MCF 10A (cell line): ENCODE measurements at regions of chr1 and their contacts with region 1.

Region 1: DNA sequence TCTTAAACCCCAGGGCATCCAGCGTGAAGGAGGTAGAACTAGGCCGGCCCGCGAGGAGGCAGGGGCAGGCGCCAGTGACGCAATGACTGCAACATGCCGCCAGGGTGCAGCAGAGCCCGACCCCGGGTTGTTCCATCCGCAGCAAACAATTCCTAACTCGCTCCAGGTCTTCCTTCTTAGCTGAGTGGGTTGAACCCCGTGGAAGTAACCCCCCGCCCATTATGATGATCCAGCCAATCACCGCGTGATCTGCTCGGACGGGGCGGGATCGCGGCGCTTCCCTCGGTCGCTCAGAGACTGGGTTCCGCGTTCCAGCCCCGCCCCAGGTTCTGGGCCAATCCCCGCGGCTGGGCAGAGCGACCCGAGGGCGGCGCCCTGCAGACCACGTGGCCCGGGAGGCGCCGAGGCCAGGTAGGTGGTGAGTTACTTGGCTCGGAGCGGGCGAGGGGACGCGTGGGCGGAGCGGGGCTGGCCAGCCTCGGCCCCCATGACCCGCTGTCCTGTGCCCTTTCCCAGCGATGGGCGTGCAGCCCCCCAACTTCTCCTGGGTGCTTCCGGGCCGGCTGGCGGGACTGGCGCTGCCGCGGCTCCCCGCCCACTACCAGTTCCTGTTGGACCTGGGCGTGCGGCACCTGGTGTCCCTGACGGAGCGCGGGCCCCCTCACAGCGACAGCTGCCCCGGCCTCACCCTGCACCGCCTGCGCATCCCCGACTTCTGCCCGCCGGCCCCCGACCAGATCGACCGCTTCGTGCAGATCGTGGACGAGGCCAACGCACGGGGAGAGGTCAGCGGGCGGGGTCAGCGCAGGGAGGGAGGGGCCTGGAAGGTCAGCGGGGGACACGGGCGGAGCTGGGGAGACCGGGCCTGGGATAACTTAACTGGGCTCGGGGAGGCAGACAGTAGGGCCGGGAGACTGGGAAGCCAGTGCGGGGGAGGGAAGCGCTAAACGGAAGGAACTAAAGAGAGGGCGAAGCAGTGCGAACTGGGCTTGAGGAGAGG is at the start of gene DUSP23:
- DNase-seq: peak; percentile 100
- H3K4me3 Mint-ChIP-seq: peak within 1 kb of the TSS; percentile 87
- H3K27ac Mint-ChIP-seq: peak within 1 kb of the TSS; percentile 71
- H3K4me1 Mint-ChIP-seq: peaks cover 65% of the 10 kb centered on the region
- H3K27me3 Mint-ChIP-seq: no peaks in the 10 kb centered on the region
- CTCF ChIP-seq: peak; percentile 97
- total RNA-seq, gene DUSP23: 119 and 178 TPM in 2 replicates

Region 2: GRCh38 chr1:159341736-159342135 is 439.1 kb before region 1 on chr1:
- CTCF ChIA-PET with region 1: no interaction called
- POLR2A ChIA-PET with region 1: no interaction called
- intact Hi-C with region 1: loop called (anchors 5 kb)
- DNase-seq: peak; percentile 20
- H3K4me3 Mint-ChIP-seq: no peak overlapping the region
- H3K27ac Mint-ChIP-seq: no peak overlapping the region
- H3K4me1 Mint-ChIP-seq: peaks cover 2% of the 10 kb centered on the region
- H3K27me3 Mint-ChIP-seq: no peaks in the 10 kb centered on the region
- CTCF ChIP-seq: no peak

Region 3: DNA sequence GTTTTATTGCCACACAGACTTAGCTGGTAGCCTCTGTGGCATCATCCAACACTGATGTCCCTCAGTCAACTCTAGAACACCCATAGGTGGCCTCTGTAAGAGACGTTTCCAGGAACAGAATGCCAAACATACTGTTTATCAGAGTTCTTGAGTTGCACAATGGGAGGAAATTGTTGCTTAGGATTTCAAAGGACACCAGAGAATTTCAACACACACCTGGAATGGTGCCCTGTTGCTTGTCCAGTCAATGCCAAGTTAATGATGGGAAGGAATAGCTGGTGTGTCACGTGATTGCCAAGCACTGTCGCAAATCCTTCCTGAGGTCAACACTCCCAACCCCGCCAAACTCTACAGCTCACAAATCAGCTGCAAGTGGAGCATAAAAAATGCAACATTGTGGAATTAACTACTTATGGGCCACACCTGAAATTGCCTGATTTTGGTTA is 28.7 kb before region 1 on chr1:
- CTCF ChIA-PET with region 1: interaction called, 17 read pairs
- POLR2A ChIA-PET with region 1: interaction called, 12 read pairs
- intact Hi-C with region 1: no loop called
- DNase-seq: peak; percentile 100
- H3K4me3 Mint-ChIP-seq: no peak overlapping the region
- H3K27ac Mint-ChIP-seq: peak overlapping the region; percentile 78
- H3K4me1 Mint-ChIP-seq: peaks cover 44% of the 10 kb centered on the region
- H3K27me3 Mint-ChIP-seq: no peaks in the 10 kb centered on the region
- CTCF ChIP-seq: no peak

Region 4: DNA sequence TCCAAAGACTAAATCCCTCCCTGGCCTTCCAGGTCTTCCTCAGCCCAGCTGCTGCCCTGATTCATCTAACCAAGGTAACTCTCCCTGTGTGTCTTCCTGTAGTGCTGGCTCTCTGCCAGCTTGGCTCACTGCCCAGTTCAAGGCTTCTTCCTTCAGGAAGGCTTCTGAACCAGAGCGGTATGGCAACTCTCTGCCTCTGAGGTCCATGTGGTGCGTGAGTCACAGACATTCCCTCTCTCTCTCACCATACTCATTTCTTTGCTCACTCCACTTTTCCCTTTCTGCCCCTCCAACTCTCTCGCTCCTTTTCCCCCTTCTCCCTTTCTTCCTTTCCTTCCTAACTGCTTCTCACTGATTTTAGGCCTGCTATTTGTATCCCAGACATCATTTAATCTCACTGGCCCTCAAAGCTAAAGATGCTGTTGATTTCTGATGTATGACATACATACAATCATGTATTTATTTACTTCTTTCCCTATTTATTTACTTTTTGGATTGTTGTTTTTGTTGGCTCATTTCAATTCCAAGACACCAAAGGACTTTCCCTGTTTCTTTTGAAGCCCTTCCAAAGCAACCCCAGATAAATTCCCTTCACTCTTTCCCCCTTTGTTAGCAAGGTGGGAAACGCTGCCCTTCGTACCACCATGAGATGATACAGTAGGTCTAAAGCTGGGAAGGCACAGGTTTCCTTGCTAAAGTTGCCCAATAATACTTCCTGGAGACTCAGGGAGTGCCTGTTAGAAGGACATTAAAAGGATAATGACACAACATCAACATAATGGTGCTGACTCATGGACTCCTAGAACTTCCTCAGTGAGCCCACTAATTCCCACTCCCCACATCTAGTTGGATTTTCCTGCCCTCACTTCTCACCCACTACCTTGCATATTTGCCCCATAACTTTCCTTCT is 101.3 kb after region 1 on chr1:
- CTCF ChIA-PET with region 1: interaction called, 253 read pairs
- POLR2A ChIA-PET with region 1: interaction called, 19 read pairs
- intact Hi-C with region 1: loop called (anchors 2 kb)
- DNase-seq: peak; percentile 100
- H3K4me3 Mint-ChIP-seq: no peak overlapping the region
- H3K27ac Mint-ChIP-seq: no peak overlapping the region
- H3K4me1 Mint-ChIP-seq: peaks cover 14% of the 10 kb centered on the region
- H3K27me3 Mint-ChIP-seq: no peaks in the 10 kb centered on the region
- CTCF ChIP-seq: no peak

Region 5: GRCh38 chr1:160124705-160125478 is 344.0 kb after region 1 on chr1:
- CTCF ChIA-PET with region 1: no interaction called
- POLR2A ChIA-PET with region 1: no interaction called
- intact Hi-C with region 1: no loop called
- DNase-seq: peak; percentile 94
- H3K4me3 Mint-ChIP-seq: no peak overlapping the region
- H3K27ac Mint-ChIP-seq: peak overlapping the region; percentile 93
- H3K4me1 Mint-ChIP-seq: peaks cover 41% of the 10 kb centered on the region
- H3K27me3 Mint-ChIP-seq: no peaks in the 10 kb centered on the region
- CTCF ChIP-seq: peak; percentile 36